ENCODE measurements at regions of chr22 and their contacts with region 1.

Region 1: DNA sequence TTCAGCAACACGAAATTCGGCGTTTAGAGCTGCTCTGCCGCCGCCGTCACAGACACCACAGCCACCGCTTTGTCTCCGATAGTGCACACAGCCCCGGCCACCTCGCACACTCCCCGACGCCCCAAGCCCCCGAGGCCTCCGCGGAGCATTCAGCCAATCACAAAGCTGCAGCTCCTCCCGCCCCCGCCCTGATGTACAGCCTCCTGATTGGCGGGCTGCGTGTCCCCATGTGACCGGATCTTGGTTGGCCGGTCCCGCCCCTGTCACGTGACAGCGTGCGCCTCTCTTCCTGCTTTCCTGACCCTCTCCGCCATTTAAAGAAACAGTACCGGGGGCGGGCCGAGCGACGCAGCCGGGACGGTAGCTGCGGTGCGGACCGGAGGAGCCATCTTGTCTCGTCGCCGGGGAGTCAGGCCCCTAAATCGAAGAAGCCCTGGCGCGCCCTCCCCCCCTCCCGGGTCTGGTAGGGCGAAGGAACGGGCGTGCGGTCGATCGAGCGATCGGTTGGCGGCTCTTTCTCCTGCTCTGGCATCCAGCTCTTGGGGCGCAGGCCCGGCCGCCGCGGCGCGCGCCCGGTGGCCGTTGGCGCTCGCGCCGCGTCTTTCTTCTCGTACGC is at the start of gene TUG1:
- DNase-seq: peak; percentile 98
- H3K4me3 ChIP-seq: peak within 1 kb of the TSS; percentile 57
- H3K4me3 Mint-ChIP-seq: peak within 1 kb of the TSS; percentile 96
- H3K27ac Mint-ChIP-seq: peak within 1 kb of the TSS; percentile 98
- H3K4me1 ChIP-seq: peaks cover 20% of the 10 kb centered on the region
- H3K4me1 Mint-ChIP-seq: no peaks in the 10 kb centered on the region
- H3K27me3 ChIP-seq: no peaks in the 10 kb centered on the region
- H3K27me3 Mint-ChIP-seq: no peaks in the 10 kb centered on the region
- CTCF ChIP-seq: no peak
- total RNA-seq, gene TUG1: 99.1 and 103 TPM in 2 replicates

Region 2: GRCh38 chr22:30920407-30920806 is 48.6 kb before region 1 on chr22:
- CTCF ChIA-PET with region 1: interaction called, 3 read pairs
- POLR2A ChIA-PET with region 1: interaction called, 15 read pairs
- intact Hi-C with region 1: no loop called
- DNase-seq: peak; percentile 73 to 84
- H3K4me3 ChIP-seq: peak overlapping the region; percentile 49
- H3K4me3 Mint-ChIP-seq: peak overlapping the region; percentile 60
- H3K27ac Mint-ChIP-seq: no peak overlapping the region
- H3K4me1 ChIP-seq: no peaks in the 10 kb centered on the region
- H3K4me1 Mint-ChIP-seq: peaks cover 5% of the 10 kb centered on the region
- H3K27me3 ChIP-seq: no peaks in the 10 kb centered on the region
- H3K27me3 Mint-ChIP-seq: no peaks in the 10 kb centered on the region
- CTCF ChIP-seq: peak; percentile 91 to 93

Region 3: DNA sequence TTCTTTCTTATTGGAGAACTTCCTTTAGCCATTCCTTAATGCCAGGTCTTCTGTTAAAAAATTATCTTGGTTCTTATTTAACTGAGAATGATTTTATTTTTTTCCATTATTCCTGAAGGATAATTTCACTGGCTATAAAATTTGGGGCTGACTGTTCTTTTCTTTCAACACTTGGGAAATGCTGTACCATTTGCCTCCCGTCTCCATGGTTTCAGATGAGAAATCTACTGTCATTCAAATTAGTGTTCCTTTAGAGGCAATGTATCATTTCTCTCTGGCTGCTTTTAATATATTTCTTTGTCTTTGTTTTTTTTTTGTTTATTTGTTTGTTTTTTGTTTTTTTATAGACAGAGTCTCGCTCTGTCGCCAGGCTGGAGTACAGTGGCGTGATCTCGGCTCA is 60.2 kb after region 1 on chr22:
- CTCF ChIA-PET with region 1: no interaction called
- POLR2A ChIA-PET with region 1: interaction called, 10 read pairs
- intact Hi-C with region 1: no loop called
- DNase-seq: no peak
- H3K4me3 ChIP-seq: no peak overlapping the region
- H3K4me3 Mint-ChIP-seq: no peak overlapping the region
- H3K27ac Mint-ChIP-seq: no peak overlapping the region
- H3K4me1 ChIP-seq: no peaks in the 10 kb centered on the region
- H3K4me1 Mint-ChIP-seq: no peaks in the 10 kb centered on the region
- H3K27me3 ChIP-seq: no peaks in the 10 kb centered on the region
- H3K27me3 Mint-ChIP-seq: no peaks in the 10 kb centered on the region
- CTCF ChIP-seq: no peak

Region 4: DNA sequence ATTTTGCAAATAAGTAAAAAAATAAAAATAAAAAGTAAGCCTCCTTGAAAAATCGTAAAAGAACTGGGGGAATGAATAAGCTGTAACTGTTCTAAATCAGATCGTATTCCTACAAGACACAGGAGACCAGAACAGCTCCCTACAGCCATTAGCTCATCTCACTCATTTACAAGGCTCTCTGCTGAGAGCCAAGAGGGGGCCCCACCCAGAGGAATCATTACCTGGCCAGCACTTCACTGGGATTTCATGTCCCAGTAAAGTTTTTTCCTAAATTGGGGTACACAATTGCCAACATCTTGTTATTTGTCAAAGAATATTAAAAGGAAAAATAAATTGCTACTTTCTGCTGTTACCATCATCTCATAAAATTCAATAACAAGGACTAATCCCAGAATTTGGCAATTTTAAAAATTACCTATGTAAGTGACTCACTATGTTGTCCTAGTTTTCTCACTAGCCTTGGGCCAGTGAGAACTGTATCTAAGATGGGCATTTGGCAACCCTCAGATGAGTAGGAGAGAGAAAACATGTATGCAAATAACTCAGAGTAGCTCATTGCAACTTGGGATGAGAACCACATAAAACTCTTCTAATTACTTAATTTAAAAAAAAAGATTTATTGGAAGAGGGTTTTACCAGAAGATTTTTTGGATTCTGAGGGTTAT is 93.7 kb after region 1 on chr22:
- CTCF ChIA-PET with region 1: interaction called, 6 read pairs
- POLR2A ChIA-PET with region 1: interaction called, 50 read pairs
- intact Hi-C with region 1: loop called (anchors 1 kb)
- DNase-seq: no peak
- H3K4me3 ChIP-seq: no peak overlapping the region
- H3K4me3 Mint-ChIP-seq: no peak overlapping the region
- H3K27ac Mint-ChIP-seq: no peak overlapping the region
- H3K4me1 ChIP-seq: peaks cover 4% of the 10 kb centered on the region; the same call in 1 of the 2 replicates
- H3K4me1 Mint-ChIP-seq: peaks cover 12% of the 10 kb centered on the region
- H3K27me3 ChIP-seq: no peaks in the 10 kb centered on the region
- H3K27me3 Mint-ChIP-seq: no peaks in the 10 kb centered on the region
- CTCF ChIP-seq: no peak

Region 5: DNA sequence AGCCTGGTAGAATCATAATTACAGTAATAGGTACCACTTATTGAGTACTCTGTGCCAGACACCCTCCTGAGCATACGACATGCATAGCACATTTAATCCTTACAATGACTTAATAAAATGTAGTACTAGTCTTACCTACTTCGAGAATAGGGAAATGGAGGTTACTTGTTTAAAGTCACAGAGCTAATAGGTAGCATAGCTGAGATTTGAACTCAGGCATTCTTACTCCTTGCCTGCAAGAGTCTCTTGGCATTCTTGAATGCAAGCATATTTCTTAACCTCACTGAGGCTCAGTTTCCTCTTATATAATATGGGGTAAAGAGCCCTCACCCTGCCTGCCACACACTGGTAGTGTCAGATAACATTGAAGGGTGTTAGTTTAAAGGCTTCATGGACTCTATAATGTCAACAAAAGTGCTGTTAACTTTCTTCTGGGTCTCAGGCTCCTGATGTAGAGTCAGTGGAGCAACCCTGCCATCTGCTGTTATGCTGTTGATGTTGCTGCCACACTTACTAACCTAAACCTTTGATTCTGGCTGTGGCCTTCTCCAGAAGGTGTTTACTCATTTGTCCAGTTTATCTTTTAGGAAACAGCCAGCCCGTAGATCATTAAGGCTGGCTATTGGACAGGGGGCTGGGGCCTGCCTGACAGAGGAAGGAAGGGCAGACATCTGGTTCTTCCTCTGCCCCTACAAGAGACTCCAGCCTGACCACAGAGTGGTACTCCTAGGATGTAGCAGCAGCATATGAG is 262.0 kb after region 1 on chr22:
- CTCF ChIA-PET with region 1: no interaction called
- POLR2A ChIA-PET with region 1: no interaction called
- intact Hi-C with region 1: loop called (anchors 10 kb)
- DNase-seq: peak; percentile 61 to 69
- H3K4me3 ChIP-seq: no peak overlapping the region
- H3K4me3 Mint-ChIP-seq: no peak overlapping the region
- H3K27ac Mint-ChIP-seq: no peak overlapping the region
- H3K4me1 ChIP-seq: peaks cover 32% of the 10 kb centered on the region
- H3K4me1 Mint-ChIP-seq: peaks cover 22% of the 10 kb centered on the region
- H3K27me3 ChIP-seq: no peaks in the 10 kb centered on the region
- H3K27me3 Mint-ChIP-seq: no peaks in the 10 kb centered on the region
- CTCF ChIP-seq: peak; percentile 75 to 85

Measured in Caco-2 (cell line).